ENCODE measurements at regions of chr12 and their contacts with region 1.

Region 1: GRCh38 chr12:59087077-59087673 is 166.9 kb upstream of the LRIG3 start:
- DNase-seq: peak in 1 of 2 donors; percentile 30
- H3K4me3 ChIP-seq: no peak overlapping the region
- H3K27ac ChIP-seq: no peak overlapping the region
- H3K4me1 ChIP-seq: peaks cover 0 to 42% (median 20%) of the 10 kb centered on the region in 4 donors
- H3K27me3 ChIP-seq: no peaks in the 10 kb centered on the region
- CTCF ChIP-seq: peak in 5 of 7 experiments; percentile 15 to 53 (median 44)
- EP300 ChIP-seq: no peak
- POLR2A ChIP-seq: no peak

Region 2: DNA sequence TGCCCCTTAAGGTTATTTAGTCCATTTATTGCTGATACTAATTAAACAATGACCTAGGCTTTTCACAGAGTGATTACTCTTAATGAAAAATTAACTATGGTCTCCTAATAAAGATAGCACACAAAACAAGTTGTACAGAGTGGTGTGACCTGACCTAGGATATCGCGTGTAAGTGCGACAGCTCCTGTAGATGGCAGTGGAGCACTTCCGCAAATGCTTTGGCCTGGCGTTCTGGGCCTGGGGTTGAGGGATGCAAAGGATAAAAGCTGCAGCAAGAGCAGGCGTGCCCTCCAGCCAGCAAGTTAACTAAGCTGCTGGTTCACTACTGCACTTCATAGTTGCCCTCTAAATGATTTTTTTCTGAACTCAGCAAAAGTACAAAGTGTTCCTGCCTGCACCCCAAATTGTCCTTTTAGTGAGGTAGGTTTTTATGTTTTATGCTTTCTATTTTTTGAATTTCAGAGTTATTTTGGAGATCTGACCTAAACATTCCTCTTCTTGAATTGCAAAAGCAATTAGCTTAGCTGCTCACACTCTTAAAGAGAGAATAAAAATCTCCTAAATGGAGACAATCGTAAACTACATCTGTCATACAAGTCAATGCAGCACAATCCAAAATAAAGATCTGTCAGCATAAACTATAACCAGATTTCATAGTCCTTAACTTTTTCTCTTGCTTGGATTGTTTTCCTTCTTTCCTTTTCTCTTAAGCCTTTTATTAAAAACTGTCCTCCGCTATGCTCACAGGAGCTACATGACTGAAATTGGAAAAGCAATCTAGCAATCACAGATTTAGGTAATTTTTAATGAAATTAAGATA is 546.5 kb before region 1 on chr12:
- intact Hi-C with region 1: loop called (anchors 10 kb)
- DNase-seq: peak; percentile 70 to 94
- H3K4me3 ChIP-seq: no peak overlapping the region
- H3K27ac ChIP-seq: peak overlapping the region in 1 of 5 donors; percentile 9
- H3K4me1 ChIP-seq: peaks cover 0 to 11% (median 7%) of the 10 kb centered on the region in 4 donors
- H3K27me3 ChIP-seq: no peaks in the 10 kb centered on the region
- CTCF ChIP-seq: peak in 5 of 7 experiments; percentile 55 to 76 (median 59)
- EP300 ChIP-seq: no peak
- POLR2A ChIP-seq: no peak

Region 3: GRCh38 chr12:59194794-59195193 is 107.6 kb after region 1 on chr12:
- intact Hi-C with region 1: no loop called
- DNase-seq: no peak
- H3K4me3 ChIP-seq: no peak overlapping the region
- H3K27ac ChIP-seq: no peak overlapping the region
- H3K4me1 ChIP-seq: no peaks in the 10 kb centered on the region
- H3K27me3 ChIP-seq: no peaks in the 10 kb centered on the region
- CTCF ChIP-seq: no peak
- EP300 ChIP-seq: no peak
- POLR2A ChIP-seq: no peak

Region 4: GRCh38 chr12:59250766-59251165 is 163.6 kb after region 1 on chr12:
- intact Hi-C with region 1: no loop called
- DNase-seq: no peak
- H3K4me3 ChIP-seq: no peak overlapping the region
- H3K27ac ChIP-seq: no peak overlapping the region
- H3K4me1 ChIP-seq: no peaks in the 10 kb centered on the region
- H3K27me3 ChIP-seq: no peaks in the 10 kb centered on the region
- CTCF ChIP-seq: no peak
- EP300 ChIP-seq: no peak
- POLR2A ChIP-seq: no peak

Region 5: DNA sequence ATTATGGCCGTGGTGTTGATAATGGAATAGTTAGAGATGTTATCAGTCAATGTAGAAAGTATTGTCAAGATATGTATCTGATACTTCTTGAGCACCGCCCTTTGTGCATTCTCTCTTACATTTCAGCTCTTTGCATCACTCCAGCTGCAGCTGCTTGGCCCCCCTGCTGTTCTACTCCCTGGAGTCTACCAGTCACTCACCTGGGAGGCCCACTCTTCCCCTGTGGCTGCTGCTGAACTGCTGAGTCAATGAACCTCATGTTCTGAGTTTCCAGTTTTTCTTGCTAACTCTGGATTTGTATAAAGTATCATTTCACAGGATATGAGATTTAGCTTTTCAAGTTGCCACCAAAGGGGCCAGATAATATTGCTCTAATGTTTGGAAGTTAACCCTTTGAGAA is 195.8 kb after region 1 on chr12:
- intact Hi-C with region 1: no loop called
- DNase-seq: no peak
- H3K4me3 ChIP-seq: no peak overlapping the region
- H3K27ac ChIP-seq: no peak overlapping the region
- H3K4me1 ChIP-seq: no peaks in the 10 kb centered on the region
- H3K27me3 ChIP-seq: no peaks in the 10 kb centered on the region
- CTCF ChIP-seq: no peak
- EP300 ChIP-seq: no peak
- POLR2A ChIP-seq: no peak